Activated naive CD4-positive, alpha-beta T cell treated with anti-CD3 and anti-CD28 coated beads for 36 hours (primary cell): ENCODE measurements at regions of chr3 and their contacts with region 1.

Region 1: DNA sequence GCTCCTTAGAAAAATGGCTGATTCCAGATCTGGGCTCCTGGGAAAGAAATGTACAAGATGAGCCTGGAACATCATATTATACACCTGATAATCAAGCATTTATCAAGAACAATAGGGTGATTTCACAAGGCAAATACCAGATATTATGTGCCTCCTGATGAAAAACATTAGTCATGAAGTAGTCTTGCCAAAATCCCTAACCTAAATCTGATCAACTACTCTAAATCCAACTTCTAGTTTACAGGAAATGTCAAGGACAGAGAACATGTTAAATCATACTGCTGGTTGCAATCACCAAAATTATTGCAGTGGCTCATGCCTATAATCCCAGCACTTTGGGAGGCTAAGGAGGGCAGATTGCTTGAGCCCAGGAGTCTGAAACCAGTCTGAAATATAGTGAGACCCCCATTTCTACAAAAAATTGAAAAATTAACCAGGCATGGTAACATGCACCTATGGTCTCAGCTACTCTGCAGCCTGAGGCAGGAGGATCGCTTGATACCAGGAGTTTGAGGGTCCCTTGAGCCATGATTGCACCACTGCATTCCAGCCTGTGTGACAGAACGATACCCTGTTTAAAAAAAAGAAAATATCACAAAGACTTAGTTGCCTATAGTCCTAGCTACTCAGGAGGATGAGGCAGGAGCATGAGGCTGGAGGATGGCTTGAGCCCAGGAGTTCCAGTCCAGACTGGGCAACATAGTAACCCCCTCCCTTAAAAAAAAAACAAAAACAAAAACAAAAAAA is 34.9 kb upstream of the ATP13A3 start:
- DNase-seq: no peak
- H3K4me3 Mint-ChIP-seq: no peak overlapping the region
- H3K27ac Mint-ChIP-seq: no peak overlapping the region
- H3K4me1 Mint-ChIP-seq: peaks cover 34% of the 10 kb centered on the region
- H3K27me3 Mint-ChIP-seq: peaks cover 7% of the 10 kb centered on the region

Region 2: DNA sequence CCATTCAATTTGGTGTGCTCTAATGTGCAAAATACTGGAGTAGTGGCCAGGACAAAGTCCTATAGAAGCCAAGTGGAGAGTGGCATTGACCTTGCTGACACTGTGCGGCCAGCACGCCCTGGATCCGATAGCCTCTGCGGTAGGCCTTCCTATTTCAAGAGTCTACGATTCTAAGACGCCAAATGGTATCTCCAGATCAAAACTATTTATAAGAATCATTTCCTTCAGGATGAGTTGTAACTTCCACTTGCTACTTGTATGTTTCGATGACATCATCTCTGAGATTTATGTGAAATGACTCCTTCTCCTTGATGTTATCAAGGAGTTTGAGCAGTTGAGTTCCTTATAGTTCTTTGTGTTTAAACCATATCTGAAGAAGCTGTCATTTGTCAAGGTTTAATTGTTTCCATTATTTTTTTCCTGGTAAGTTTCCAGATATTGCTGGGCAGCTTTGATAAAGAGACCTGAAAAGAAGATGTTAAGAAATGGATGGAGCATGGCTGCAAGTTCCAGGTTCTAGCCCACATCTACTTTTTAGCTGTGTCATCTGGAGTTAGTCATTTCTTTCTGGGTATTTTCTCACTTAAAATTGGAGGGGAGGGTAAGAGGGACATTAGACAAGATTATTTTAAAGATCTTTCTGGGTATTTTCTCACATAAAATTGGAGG is 39.8 kb after region 1 on chr3:
- CTCF ChIA-PET with region 1: interaction called, 3 read pairs
- intact Hi-C with region 1: loop called (anchors 2 kb)
- DNase-seq: no peak
- H3K4me3 Mint-ChIP-seq: no peak overlapping the region
- H3K27ac Mint-ChIP-seq: no peak overlapping the region
- H3K4me1 Mint-ChIP-seq: peaks cover 13% of the 10 kb centered on the region
- H3K27me3 Mint-ChIP-seq: peaks cover 5% of the 10 kb centered on the region

Region 3: GRCh38 chr3:194583604-194584318 is 62.1 kb after region 1 on chr3:
- CTCF ChIA-PET with region 1: no interaction called
- intact Hi-C with region 1: loop called (anchors 2 kb)
- DNase-seq: peak; percentile 94
- H3K4me3 Mint-ChIP-seq: peak overlapping the region; percentile 94
- H3K27ac Mint-ChIP-seq: peak overlapping the region; percentile 94
- H3K4me1 Mint-ChIP-seq: peaks cover 19% of the 10 kb centered on the region
- H3K27me3 Mint-ChIP-seq: no peaks in the 10 kb centered on the region

Region 4: GRCh38 chr3:194769020-194769643 is 247.4 kb after region 1 on chr3:
- CTCF ChIA-PET with region 1: no interaction called
- intact Hi-C with region 1: loop called (anchors 1 kb)
- DNase-seq: peak; percentile 99
- H3K4me3 Mint-ChIP-seq: peak overlapping the region; percentile 70
- H3K27ac Mint-ChIP-seq: peak overlapping the region; percentile 66
- H3K4me1 Mint-ChIP-seq: peaks cover 11% of the 10 kb centered on the region
- H3K27me3 Mint-ChIP-seq: no peaks in the 10 kb centered on the region